ENCODE measurements at regions of chr16 and their contacts with region 1.

Region 1: GRCh38 chr16:667780-668518 is at the start of gene RHOT2:
- DNase-seq: peak; percentile 63 to 93
- ATAC-seq: peak; percentile 81 to 94
- H3K4me3 ChIP-seq: peak within 1 kb of the TSS; percentile 98
- H3K27ac ChIP-seq: peak within 1 kb of the TSS; percentile 90 to 93
- H3K4me1 ChIP-seq: peaks cover 11% of the 10 kb centered on the region
- CTCF ChIP-seq: peak; percentile 86
- EP300 ChIP-seq: no peak
- POLR2A ChIP-seq: peak; percentile 73
- RAD21 ChIP-seq: peak in 1 of 2 experiments; percentile 51; a peak in 4 of 5 replicates
- polyA plus RNA-seq, gene RHOT2: 33.9 and 38.0 TPM in 2 replicates

Region 2: DNA sequence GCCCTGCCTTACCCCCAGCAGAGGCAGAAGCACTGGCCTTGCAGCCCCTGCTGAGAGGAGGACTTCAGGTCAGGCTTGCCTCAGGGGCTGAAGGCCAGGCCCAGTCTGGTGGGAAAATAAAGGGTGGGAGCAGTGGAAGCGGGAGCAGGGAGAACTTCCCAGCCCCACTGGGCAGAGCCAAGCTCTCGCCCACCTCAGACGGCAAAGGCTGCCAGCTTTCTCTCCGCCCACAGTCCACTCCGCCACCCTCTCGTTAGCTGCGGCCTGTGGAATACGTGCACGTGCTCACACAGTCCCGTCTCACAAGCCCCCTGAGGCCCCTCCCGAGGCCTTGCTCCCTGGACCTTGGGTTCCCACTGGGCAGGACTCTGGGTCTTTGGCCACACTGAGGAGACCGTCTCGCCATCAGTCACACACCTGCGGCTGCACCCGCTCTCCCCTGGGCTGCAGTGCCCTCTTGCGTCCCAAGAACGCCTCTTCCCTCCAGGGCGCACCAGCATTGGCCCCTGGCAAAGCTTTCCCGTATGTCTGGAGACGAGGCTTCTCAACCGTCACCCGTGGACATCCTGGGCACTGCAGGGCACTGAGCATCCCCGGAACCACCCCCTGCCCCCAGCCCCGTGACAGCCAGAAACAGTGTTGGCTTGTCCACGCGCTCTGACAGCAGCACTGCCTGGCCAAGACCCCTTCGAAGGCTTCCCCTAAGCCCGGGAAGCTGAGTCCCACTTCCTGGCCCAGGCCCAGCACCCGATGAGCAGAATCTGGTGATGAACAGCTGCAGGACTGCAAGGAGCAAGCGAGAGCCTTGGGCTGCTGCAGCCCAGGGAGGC is 305.9 kb before region 1 on chr16:
- CTCF ChIA-PET with region 1: no interaction called
- POLR2A ChIA-PET with region 1: no interaction called
- DNase-seq: peak; percentile 89 to 94
- ATAC-seq: peak; percentile 86 to 94
- H3K4me3 ChIP-seq: no peak overlapping the region
- H3K27ac ChIP-seq: 0 out of 6 replicates have a peak overlapping the region, but pooled peaks of 1 of the 2 experiments have one; percentile 49
- H3K4me1 ChIP-seq: peaks cover 7% of the 10 kb centered on the region; the same call in 2 of the 3 replicates
- CTCF ChIP-seq: peak; percentile 88
- EP300 ChIP-seq: no peak
- POLR2A ChIP-seq: no peak
- RAD21 ChIP-seq: peak; percentile 96 to 97

Region 3: GRCh38 chr16:578870-579405 is 89.0 kb before region 1 on chr16:
- CTCF ChIA-PET with region 1: interaction called, 105 read pairs
- POLR2A ChIA-PET with region 1: no interaction called
- DNase-seq: peak; percentile 61 to 84
- ATAC-seq: peak; percentile 72 to 89
- H3K4me3 ChIP-seq: 0 out of 3 replicates have a peak overlapping the region, but pooled peaks have one; percentile 29
- H3K27ac ChIP-seq: peak overlapping the region in 1 of 2 experiments; percentile 78; a peak in 2 of 6 replicates
- H3K4me1 ChIP-seq: peaks cover 6% of the 10 kb centered on the region; the same call in 2 of the 3 replicates
- CTCF ChIP-seq: peak; percentile 82
- EP300 ChIP-seq: no peak
- POLR2A ChIP-seq: no peak
- RAD21 ChIP-seq: peak; percentile 82

Region 4: GRCh38 chr16:648781-649589 is 19.0 kb before region 1 on chr16 and contains the start of gene WDR90:
- CTCF ChIA-PET with region 1: interaction called, 16 read pairs
- POLR2A ChIA-PET with region 1: no interaction called
- DNase-seq: peak; percentile 94
- ATAC-seq: peak; percentile 70 to 85
- H3K4me3 ChIP-seq: peak within 1 kb of the TSS; percentile 79
- H3K27ac ChIP-seq: peak within 1 kb of the TSS; percentile 90 to 99
- H3K4me1 ChIP-seq: peaks cover 43% of the 10 kb centered on the region
- CTCF ChIP-seq: no peak
- EP300 ChIP-seq: no peak
- POLR2A ChIP-seq: peak; percentile 57
- RAD21 ChIP-seq: no peak
- polyA plus RNA-seq, gene WDR90: 6.5 and 7.3 TPM in 2 replicates

Region 5: DNA sequence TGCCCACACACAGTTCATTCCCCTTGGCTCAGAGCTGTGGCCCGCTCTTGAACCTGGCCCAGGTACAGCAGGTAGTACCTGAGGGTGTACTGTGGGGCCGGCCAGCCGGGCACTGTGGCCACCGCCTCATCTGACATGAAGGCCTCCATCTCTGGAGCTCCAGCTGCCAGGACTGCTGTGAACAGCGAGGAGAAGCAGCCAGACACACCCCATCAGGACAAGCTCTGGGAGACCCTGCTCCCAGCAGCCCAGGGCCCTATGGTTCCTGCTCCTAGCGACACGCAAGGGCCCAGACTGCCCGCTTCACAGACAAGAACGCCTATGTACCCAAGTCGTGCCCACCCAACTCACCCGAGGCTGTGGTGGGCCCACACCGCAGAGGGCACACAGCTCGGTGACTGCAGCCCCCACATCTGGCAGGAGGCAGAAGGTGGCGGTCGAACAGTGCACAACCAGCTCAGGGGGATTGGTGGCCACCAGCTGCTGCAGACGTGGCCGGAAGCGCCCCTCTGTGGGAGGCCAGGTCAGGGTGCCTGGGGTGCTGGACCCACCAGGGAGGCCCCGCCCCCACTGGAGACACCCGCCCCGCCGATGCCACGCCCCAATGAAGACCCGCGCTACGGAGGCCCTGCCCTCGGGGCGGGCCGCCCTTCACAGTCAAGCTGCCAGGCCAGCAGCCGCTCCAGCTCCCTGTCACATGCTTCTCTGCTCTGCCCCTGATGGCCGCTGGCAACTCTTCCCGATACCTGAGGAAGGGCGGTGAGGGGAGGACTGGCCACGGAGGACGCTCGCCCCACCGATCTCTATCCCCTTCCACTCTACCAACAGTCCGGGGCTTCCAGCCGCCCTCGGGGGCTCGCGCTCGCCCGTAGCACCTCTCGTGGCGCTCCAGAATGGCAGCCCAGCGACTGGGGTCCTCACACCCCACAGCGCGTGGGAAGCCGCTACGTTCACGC is 11.2 kb after region 1 on chr16:
- CTCF ChIA-PET with region 1: interaction called, 21 read pairs
- POLR2A ChIA-PET with region 1: interaction called, 3 read pairs
- DNase-seq: peak in 1 of 2 experiments; percentile 67
- ATAC-seq: peak; percentile 1 to 19; a peak in 4 of 6 replicates
- H3K4me3 ChIP-seq: peak overlapping the region; percentile 54
- H3K27ac ChIP-seq: peak overlapping the region; percentile 67 to 97
- H3K4me1 ChIP-seq: peaks cover 49% of the 10 kb centered on the region
- CTCF ChIP-seq: no peak
- EP300 ChIP-seq: no peak
- POLR2A ChIP-seq: no peak; the same call in 1 of the 2 replicates
- RAD21 ChIP-seq: no peak

Region 6: DNA sequence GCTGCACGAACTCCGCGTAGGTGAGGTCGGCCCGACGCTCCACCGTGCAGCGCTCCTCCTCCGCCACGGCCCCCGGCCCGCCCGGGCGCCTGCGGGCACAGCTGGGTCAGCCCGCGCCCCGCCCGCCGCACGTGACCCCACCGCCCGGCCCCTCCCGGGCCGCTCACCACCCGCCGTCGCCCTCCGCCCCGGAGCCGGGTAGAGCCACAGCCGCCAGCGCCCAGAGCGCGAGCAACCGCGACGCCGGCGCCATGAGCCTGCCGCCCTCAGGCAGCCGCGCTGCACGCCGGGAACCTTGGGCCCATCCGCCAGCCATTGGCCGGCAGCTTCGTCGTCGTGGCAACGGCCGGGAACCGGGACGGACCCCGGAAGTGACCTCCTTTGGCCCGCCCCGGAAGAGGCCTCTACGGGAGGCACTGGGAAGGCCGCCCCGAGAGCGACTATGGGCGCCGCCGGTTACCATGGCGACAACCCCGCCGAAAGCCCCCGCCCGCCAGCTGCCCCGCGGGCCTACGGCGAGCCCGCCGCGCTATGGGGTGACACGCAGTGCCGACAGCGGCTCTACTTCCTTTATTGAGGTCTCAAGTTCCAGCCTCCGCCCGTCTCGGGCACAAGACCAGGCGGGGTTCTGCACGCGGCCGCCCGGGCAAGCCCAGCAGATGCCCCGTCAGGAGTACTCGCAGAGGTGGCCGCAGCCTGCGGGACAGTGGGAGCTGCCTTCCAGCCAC is 16.3 kb after region 1 on chr16 and contains the start of gene JMJD8:
- CTCF ChIA-PET with region 1: interaction called, 32 read pairs
- POLR2A ChIA-PET with region 1: interaction called, 3 read pairs
- DNase-seq: peak; percentile 90 to 97
- ATAC-seq: peak; percentile 61 to 77
- H3K4me3 ChIP-seq: peak within 1 kb of the TSS; percentile 76
- H3K27ac ChIP-seq: peak within 1 kb of the TSS; percentile 91 to 93
- H3K4me1 ChIP-seq: peaks cover 34% of the 10 kb centered on the region
- CTCF ChIP-seq: no peak
- EP300 ChIP-seq: no peak
- POLR2A ChIP-seq: peak; percentile 88
- RAD21 ChIP-seq: no peak
- polyA plus RNA-seq, gene JMJD8: 37.5 and 43.8 TPM in 2 replicates